Breast epithelium (tissue), 4 donors: ENCODE measurements at regions of chr6 and their contacts with region 1.

Region 1: DNA sequence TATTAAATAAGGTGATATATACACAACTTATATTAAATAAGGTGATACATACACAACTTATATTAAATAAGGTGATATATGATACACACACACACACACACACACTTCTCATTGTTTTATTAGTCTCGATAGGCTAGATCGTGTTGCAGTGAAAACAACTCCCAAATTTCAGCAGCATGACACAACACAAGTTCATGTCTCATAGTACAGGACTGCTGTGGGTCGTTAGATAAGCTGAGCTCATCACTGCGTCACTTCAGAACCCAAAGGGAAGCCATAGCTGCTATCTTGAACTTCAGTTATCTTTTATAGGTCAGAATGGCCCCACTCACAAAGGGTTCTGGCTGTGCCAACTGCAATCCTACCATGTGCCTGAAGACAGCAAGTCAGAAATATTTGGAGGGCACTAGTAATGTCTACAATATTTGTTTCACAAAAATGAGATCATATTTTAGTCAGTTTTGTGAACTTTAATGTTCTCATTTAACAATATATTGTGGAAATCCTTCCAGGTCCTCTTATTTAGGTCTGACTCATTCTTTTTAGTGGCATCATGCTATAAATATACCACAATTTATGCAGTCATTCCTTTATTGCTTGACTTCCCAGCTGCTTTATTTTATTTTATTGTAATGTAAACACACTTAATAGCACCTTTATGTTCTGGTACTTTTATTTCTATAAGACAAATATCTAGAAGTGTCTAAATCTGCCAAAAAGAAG is 290.2 kb downstream of the PHACTR1 start:
- DNase-seq: no peak
- H3K4me3 ChIP-seq: no peak overlapping the region
- H3K27ac ChIP-seq: no peak overlapping the region
- H3K4me1 ChIP-seq: no peaks in the 10 kb centered on the region
- H3K27me3 ChIP-seq: peaks cover 0 to 3% of the 10 kb centered on the region in 2 donors
- CTCF ChIP-seq: no peak
- POLR2A ChIP-seq: no peak

Region 2: DNA sequence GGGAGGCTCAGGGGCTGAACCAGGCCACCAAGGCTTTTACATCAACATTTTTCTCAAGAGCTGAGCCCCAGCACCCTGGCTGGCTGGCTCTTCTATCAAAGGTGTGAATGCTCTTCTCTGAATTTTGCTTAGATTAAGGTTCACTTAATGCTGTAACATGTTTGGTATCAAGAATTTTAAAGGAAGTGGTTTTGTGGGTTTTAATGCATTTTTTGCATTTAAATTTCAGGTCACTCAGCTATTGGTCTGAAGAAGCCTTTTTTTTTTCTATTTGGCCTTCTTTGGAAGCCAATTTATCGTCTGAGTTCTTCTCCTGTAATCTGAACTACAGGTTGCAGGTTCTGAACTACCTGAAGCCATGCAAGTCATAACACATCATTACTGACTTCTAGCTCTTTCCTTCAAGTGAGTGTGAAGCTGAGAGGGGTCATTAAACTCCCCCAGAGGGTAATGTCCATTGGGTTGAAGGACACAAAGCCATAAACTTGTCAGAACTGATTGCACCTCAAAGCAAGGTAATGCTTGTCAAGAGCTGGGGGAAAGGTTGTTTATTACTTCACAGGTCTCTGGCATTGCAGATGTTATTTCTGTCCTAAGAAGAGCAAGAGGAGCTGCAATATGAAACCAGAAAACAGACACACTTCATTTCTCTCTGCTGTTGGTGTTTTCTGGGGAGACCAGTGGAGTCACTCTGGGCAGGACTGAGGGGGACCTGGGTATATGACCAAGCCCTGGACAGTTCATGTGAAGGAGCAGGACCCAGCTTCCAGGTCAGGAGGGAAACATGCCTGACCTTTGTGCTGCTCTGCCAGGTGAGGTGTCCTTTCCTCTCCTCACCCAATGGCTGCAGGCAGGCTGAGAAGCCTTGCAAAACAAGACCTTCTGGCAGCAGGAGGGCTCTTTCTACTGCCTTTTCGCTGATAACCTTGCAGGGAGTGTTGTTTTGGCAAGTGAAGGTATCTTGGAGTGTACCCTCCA is 1748.2 kb before region 1 on chr6:
- intact Hi-C with region 1: no loop called
- DNase-seq: no peak
- H3K4me3 ChIP-seq: no peak overlapping the region
- H3K27ac ChIP-seq: no peak overlapping the region
- H3K4me1 ChIP-seq: no peaks in the 10 kb centered on the region
- H3K27me3 ChIP-seq: no peaks in the 10 kb centered on the region
- CTCF ChIP-seq: no peak
- POLR2A ChIP-seq: no peak

Region 3: DNA sequence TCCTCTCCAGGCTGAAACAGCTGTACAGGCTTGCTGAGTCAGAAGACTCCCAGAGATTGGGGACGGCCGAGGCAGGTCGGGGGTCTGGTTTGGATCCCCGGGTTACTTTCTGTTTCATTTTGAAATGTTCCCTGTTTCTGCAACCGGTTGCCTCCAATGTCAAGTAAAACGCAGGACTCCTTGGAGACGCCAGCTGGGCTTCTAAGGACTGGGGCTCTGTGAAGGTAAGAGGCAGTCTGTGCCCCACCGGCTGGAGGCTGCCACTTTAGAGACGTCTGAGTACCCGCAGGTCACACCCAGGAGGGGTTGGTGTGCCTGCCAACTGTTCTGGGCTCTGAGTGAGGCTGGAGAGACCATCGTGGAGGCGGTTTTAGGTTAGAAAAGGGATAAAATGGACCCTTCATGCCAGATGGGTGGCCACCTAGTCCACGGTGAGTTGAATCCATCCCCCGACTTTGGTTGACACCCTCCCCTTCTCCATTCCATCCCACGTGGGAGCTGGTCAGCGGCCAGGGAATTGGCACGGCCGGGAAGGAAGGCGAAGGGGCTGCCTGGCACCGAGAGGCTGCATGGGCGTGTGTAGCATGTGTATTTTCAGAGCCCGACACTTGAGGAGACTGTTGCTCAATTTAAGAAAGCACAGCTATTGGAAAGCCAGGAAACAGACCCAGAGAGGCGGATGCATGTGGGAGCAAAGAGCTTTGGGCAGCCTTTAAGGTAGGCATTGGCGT is 49.3 kb before region 1 on chr6:
- intact Hi-C with region 1: no loop called
- DNase-seq: no peak
- H3K4me3 ChIP-seq: peak overlapping the region; percentile 62 to 76 (median 67)
- H3K27ac ChIP-seq: peak overlapping the region; percentile 75 to 80
- H3K4me1 ChIP-seq: no peaks in the 10 kb centered on the region
- H3K27me3 ChIP-seq: no peaks in the 10 kb centered on the region
- CTCF ChIP-seq: no peak
- POLR2A ChIP-seq: no peak

Region 4: DNA sequence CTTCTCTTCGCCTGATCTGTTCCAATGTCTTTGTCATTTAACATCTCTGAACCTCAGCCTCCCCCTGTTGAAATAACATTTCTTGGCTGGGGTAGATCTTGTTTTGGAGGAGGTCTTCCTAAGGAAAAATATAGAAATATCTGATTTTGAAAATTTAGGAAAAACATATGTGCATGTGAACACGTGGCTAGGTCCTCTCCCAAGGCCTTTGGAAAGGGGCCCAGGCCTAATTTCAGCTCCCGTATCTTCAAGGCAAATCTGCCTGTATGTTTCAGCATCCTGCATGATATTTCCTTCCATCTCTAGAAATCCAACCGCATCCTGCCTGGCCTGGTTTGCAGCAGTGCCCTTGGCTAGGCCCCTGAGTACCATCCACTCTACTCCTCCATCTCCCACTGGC is 28.9 kb before region 1 on chr6:
- intact Hi-C with region 1: loop called (anchors 2 kb)
- DNase-seq: no peak
- H3K4me3 ChIP-seq: no peak overlapping the region
- H3K27ac ChIP-seq: no peak overlapping the region
- H3K4me1 ChIP-seq: no peaks in the 10 kb centered on the region
- H3K27me3 ChIP-seq: no peaks in the 10 kb centered on the region
- CTCF ChIP-seq: no peak
- POLR2A ChIP-seq: no peak

Region 5: DNA sequence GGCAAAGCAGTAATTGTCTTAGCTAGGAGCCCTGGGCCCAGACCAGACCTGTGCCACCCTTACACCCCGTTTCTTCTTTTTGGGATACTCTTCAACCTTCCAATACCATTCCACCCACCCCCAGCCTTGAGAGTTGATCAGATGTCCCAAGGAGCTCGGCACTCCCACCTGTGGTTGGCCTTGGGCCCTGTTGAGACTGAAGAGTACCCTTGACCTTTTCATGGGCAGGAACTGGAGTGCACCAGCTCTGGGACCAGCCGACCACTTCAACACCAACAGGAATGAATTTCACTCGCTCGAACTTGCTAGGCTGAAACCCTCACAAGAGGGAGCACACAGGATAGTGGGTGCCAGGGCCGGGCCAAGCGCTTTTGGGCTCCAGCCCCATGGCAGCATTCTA is 16.6 kb before region 1 on chr6:
- intact Hi-C with region 1: no loop called
- DNase-seq: no peak
- H3K4me3 ChIP-seq: no peak overlapping the region
- H3K27ac ChIP-seq: no peak overlapping the region
- H3K4me1 ChIP-seq: no peaks in the 10 kb centered on the region
- H3K27me3 ChIP-seq: no peaks in the 10 kb centered on the region
- CTCF ChIP-seq: no peak
- POLR2A ChIP-seq: no peak

Region 6: DNA sequence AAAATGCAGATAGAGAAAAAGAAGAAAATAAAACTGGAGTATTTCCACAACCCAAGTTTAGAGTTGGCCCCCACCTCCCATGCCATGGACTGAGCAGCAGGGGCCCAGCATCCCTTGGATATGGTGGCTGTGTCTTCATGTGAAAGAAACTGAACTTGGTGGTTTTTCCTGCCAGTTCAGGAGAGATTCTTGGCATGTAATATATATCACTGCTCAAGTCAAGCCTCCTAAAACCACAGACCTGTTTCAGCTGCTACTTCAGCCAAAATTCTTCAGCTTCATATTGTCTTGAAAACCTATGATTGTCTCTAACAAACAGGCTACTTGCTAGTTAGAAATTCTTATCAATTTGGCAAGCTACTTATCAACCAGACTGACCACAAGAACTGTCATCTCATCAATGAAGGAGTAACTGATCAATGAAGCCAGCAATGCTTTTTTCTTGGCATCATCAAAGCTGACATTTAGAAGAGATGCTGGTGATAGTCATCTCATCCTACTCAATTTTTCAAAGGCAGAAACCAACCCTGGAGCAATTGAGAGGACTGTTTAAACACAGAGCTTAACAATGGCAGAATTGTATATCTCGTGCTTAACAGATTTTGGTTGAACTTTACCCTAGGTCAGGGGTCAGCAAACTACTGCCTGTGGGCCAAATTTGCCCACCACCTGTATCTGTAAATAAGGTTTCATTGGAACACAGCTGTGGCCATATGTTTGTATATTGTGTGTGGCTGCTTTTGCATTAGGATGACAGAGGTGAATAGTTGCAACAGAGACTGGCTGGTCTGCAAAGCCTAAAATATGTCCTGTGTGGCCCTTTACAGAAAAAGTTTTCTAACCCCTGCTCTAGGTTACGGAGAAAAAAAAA is 598.0 kb after region 1 on chr6:
- intact Hi-C with region 1: loop called (anchors 5 kb)
- DNase-seq: no peak
- H3K4me3 ChIP-seq: no peak overlapping the region
- H3K27ac ChIP-seq: no peak overlapping the region
- H3K4me1 ChIP-seq: no peaks in the 10 kb centered on the region
- H3K27me3 ChIP-seq: no peaks in the 10 kb centered on the region
- CTCF ChIP-seq: no peak
- POLR2A ChIP-seq: no peak